ENCODE measurements at regions of chr3 and their contacts with region 1.

Region 1: DNA sequence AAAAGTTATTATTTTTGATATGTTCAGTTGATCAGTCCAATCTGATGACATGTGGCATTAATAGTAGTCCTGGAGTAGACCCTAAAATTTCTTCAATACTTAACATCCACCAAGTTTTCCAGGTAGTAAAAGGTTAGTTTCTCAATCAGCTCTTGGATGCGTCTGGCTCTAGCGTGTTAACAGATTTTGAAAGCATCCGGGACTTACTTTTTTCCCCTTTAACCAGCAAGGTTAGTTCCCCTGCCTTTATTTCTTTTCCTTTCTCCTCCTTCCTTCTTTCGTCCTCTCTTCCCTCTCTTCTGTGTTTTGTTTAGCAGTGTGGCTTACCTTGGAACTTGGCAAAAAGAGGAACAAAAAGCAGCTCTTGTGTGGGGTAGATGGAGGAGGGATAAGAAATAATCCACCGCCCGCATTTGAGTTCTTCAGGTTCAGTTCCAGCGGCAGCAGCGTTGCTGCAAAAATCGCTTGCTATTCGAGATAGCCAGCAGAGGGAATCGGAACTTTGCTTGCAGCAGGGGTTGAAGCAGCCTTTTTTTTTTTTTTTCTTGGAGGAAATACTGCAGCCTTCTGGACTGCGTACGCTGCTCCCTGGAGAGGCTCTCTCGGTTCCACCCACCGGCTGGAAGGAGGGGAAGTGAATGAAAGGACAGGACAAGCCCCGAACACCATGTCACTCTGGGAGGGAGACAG is at the start of gene RBMS3:
- DNase-seq: peak; percentile 75 to 95
- H3K4me3 ChIP-seq: peak within 1 kb of the TSS; percentile 58 to 65
- H3K27ac ChIP-seq: peak within 1 kb of the TSS; percentile 90 to 91
- H3K4me1 ChIP-seq: peaks cover 0 to 10% of the 10 kb centered on the region in 2 donors
- H3K27me3 ChIP-seq: no peaks in the 10 kb centered on the region
- CTCF ChIP-seq: peak; percentile 30 to 61 (median 46)
- total RNA-seq, gene RBMS3: 65.8 TPM

Region 2: GRCh38 chr3:28916713-28917499 is 363.6 kb before region 1 on chr3:
- intact Hi-C with region 1: loop called (anchors 5 kb)
- DNase-seq: peak in 1 of 2 donors; percentile 88
- H3K4me3 ChIP-seq: peak overlapping the region in 1 of 2 donors; percentile 55
- H3K27ac ChIP-seq: peak overlapping the region; percentile 72 to 79
- H3K4me1 ChIP-seq: peaks cover 0 to 8% of the 10 kb centered on the region in 2 donors
- H3K27me3 ChIP-seq: no peaks in the 10 kb centered on the region
- CTCF ChIP-seq: peak; percentile 54 to 66 (median 65)

Region 3: GRCh38 chr3:29137601-29138000 is 142.9 kb before region 1 on chr3:
- intact Hi-C with region 1: no loop called
- DNase-seq: no peak
- H3K4me3 ChIP-seq: no peak overlapping the region
- H3K27ac ChIP-seq: no peak overlapping the region
- H3K4me1 ChIP-seq: peaks cover 0 to 11% of the 10 kb centered on the region in 2 donors
- H3K27me3 ChIP-seq: no peaks in the 10 kb centered on the region
- CTCF ChIP-seq: no peak

Region 4: DNA sequence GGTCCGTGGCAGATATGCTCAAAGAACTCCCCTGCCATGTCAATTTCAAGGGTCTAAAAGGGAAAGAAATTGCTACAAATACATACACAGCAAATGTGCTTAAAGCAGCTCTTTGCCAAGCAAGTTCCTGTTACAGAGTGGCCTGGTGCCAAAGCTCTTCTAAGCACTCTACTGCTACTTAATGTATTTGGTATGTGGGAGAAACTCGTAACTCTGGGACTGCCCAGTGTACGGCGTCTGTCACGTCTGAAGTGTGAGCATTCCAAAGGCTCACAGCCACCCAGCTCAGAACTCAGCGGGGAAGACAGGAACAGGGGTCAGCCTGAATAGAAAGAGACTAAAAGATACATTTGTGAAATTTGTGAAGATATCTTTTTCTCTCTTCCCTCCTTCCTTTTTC is 54.9 kb after region 1 on chr3:
- intact Hi-C with region 1: loop called (anchors 2 kb)
- DNase-seq: peak; percentile 22 to 95
- H3K4me3 ChIP-seq: peak overlapping the region; percentile 32 to 35
- H3K27ac ChIP-seq: peak overlapping the region; percentile 65 to 88
- H3K4me1 ChIP-seq: peaks cover 0 to 69% of the 10 kb centered on the region in 2 donors
- H3K27me3 ChIP-seq: no peaks in the 10 kb centered on the region
- CTCF ChIP-seq: no peak

Region 5: DNA sequence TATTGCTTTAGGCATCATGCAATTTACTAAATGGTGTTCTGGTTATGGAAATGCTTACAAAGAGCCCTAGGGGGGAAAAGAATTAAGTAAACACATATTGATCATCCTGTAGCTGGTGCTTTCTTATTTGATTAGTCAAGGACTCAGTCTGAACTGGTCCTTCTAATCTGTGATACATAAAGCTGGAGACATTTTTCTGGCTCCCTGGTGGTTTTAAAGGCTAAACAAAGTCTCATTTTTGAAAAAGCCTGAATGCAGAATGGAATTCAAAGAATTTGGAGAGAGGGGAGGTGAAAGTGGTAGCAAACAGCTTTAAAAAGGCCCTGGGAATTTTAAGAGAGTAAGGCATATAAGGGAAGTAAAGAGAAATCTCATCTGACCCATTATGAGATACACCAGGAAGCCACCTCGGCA is 150.0 kb after region 1 on chr3:
- intact Hi-C with region 1: loop called (anchors 2 kb)
- DNase-seq: no peak
- H3K4me3 ChIP-seq: no peak overlapping the region
- H3K27ac ChIP-seq: peak overlapping the region; percentile 56 to 59
- H3K4me1 ChIP-seq: peaks cover 0 to 44% of the 10 kb centered on the region in 2 donors
- H3K27me3 ChIP-seq: no peaks in the 10 kb centered on the region
- CTCF ChIP-seq: no peak

Region 6: DNA sequence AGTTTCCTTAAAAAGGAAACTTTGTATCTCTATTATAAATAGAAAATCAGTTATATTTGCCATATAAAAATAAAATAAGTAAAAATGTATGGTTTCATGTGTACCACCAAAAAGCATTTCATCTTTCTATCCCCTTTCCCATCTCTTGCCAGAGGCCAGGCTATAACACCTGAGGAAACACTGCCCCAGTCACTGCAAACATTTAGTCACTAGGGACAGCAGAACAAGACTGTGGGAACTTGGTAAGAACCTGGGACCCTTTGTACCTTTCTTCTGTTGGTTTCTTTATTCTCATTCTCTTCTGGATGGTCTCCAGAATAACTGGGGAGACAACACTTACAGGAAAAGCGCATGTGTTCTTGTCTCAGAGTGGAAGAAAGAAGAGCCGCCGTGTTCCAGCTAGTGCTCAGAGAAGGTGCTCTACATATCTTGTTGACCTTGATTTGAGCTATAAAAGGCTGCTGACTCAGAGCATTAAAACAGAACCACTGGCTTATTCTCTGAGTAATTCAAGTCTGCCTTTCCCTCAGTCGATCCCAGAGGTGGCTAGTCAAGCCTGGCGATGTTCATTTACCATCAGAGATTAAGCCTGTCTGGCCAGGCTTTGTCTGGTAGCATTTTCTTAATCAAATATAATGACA is 362.0 kb after region 1 on chr3:
- intact Hi-C with region 1: loop called (anchors 5 kb)
- DNase-seq: no peak
- H3K4me3 ChIP-seq: no peak overlapping the region
- H3K27ac ChIP-seq: peak overlapping the region; percentile 65 to 77
- H3K4me1 ChIP-seq: peaks cover 2 to 17% of the 10 kb centered on the region in 2 donors
- H3K27me3 ChIP-seq: no peaks in the 10 kb centered on the region
- CTCF ChIP-seq: peak in 1 of 3 experiments; percentile 6

Region 7: DNA sequence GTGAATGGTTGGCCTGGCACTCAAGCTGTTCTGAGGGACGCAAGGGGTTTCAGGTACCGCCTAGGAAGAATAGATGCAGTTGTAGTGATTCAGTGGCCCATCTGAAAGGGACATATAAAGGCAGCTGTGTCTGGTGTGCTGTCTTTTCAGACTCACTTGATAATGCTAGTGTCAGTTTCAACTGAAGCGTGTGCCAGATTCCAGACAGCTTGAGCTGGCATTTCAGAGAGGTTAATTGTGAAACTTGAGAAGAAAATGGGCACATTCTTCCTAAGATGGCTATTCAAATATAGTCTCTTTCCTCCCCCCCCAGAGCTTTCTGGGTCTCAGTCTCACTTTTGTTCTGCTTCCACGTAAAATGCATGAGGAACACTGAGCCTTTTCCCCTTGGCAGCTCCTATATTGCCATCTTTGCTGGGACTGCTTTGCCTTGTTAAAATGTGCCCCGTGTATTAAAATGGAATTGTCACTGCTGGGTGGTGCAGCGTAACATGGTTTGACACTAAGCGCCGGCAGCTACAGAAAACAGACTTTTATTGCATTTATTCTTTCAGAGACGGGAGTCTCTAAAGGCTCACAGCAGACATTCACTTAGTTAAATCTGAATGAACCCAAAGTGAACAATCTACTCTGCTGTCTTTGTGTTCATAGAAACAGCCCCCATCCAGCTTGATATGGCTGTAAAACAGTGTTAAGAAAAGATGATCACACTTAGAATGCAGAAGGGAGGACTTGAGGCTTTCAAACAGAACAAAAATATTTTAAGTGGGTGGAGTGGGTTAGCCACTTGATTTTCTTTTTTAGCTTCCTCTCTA is 479.1 kb after region 1 on chr3:
- intact Hi-C with region 1: loop called (anchors 2 kb)
- DNase-seq: no peak
- H3K4me3 ChIP-seq: peak overlapping the region in 1 of 2 donors; percentile 21
- H3K27ac ChIP-seq: peak overlapping the region; percentile 76 to 81
- H3K4me1 ChIP-seq: peaks cover 4 to 35% of the 10 kb centered on the region in 2 donors
- H3K27me3 ChIP-seq: no peaks in the 10 kb centered on the region
- CTCF ChIP-seq: no peak